Breast epithelium (tissue), 4 donors: ENCODE measurements at regions of chr22 and their contacts with region 1.

Region 1: GRCh38 chr22:35739076-35739930 is 21.6 kb downstream of the APOL5 start:
- DNase-seq: no peak
- H3K4me3 ChIP-seq: no peak overlapping the region
- H3K27ac ChIP-seq: no peak overlapping the region
- H3K4me1 ChIP-seq: no peaks in the 10 kb centered on the region
- H3K27me3 ChIP-seq: no peaks in the 10 kb centered on the region
- CTCF ChIP-seq: peak in 1 of 3 donors; percentile 16
- POLR2A ChIP-seq: no peak

Region 2: GRCh38 chr22:35150183-35151107 is 588.9 kb before region 1 on chr22:
- intact Hi-C with region 1: no loop called
- DNase-seq: peak; percentile 27 to 59
- H3K4me3 ChIP-seq: no peak overlapping the region
- H3K27ac ChIP-seq: no peak overlapping the region
- H3K4me1 ChIP-seq: no peaks in the 10 kb centered on the region
- H3K27me3 ChIP-seq: peaks cover 0 to 28% of the 10 kb centered on the region in 2 donors
- CTCF ChIP-seq: peak; percentile 16 to 54 (median 49)
- POLR2A ChIP-seq: no peak

Region 3: DNA sequence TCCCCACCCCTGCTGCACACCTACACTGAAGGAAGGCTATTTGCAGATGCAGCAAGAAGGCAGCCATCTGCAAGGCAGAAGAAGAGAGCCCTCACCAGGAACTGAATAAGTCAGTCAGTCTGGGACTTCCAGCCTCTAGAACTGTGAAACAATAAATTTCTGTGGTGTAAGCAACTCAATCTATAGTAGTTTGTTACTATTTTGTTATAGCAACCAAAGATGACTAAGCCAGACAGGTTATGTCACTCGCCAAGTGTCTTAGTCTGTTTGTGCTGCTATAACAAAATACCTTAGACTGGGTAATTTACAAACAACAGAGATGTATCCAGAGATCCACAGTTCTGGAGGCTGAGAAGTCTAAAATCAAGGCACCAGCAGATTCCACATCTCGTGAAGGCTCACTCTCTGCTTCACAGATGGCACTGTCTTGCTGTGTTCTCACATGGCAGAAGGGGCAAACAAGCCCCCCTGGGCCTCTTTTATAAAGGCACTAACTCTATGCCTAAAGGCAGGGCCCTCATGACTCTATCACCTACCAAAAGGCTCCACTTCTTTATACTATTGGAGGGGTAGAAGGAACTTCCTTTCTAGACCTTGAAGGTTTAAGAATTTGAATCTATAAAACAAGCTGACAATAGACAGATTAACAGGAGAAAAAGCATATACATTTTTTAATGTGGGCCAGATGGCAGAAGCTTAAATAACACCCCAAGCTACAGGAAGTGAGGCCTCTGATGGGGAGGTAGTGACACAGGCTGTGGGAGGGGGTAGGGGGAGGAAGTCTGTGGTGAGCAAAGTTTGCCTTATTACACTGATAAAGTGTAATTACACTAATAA is 78.8 kb before region 1 on chr22:
- intact Hi-C with region 1: loop called (anchors 10 kb)
- DNase-seq: no peak
- H3K4me3 ChIP-seq: no peak overlapping the region
- H3K27ac ChIP-seq: peak overlapping the region in 1 of 2 donors; percentile 2
- H3K4me1 ChIP-seq: no peaks in the 10 kb centered on the region
- H3K27me3 ChIP-seq: no peaks in the 10 kb centered on the region
- CTCF ChIP-seq: no peak
- POLR2A ChIP-seq: no peak